ENCODE measurements at regions of chr1 and their contacts with region 1.

Region 1: GRCh38 chr1:221741711-221742554 is at the start of gene DUSP10:
- DNase-seq: peak; percentile 99
- H3K4me3 Mint-ChIP-seq: no peak within 1 kb of the TSS
- H3K27ac Mint-ChIP-seq: peak within 1 kb of the TSS; percentile 48
- H3K4me1 Mint-ChIP-seq: peaks cover 33% of the 10 kb centered on the region
- H3K27me3 Mint-ChIP-seq: no peaks in the 10 kb centered on the region
- total RNA-seq, gene DUSP10: 9.1 TPM

Region 2: DNA sequence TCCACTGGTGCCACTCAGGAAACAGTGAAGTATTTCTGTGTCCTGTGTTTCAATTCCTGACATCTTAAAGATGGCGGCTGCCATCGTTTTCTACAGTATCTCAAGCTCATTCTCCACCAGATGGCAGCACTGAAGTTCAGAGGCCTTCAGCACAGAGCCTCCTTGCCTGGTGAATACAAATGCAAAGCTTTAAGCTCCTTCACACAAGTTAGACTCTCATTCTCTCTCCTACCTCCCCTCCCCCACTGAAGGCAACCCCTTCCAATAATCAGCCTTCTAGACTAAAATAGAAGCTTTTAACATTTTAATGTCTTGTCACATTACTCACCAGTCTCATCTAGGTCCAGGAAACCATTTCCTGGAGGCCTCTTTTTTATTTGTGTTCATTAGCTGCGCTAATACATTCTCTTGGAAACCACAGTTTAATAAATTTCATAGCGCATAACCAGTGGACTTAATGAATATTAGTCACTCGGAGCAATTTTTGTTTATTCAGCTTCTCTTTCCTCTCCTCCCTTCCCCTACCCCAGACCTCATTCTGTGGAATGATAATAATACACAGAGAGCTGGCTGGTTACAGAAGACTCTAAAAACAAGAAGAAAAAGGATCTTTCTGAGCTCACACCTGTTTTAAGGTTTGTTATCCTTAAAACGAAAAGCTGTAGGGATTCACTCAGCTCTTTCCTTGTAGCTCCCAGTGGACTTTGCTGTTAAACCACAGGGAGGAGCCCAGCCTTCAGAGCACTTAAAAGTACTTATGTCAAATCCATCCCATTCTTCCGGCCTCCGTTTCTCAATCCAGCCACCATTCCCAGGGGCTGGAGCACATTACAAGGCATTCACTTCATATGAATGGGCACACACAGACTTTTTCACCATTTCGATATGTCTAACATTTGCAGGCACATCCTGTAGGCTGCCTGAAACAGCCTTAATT is 477.8 kb before region 1 on chr1:
- CTCF ChIA-PET with region 1: no interaction called
- intact Hi-C with region 1: loop called (anchors 5 kb)
- DNase-seq: peak; percentile 60
- H3K4me3 Mint-ChIP-seq: no peak overlapping the region
- H3K27ac Mint-ChIP-seq: no peak overlapping the region
- H3K4me1 Mint-ChIP-seq: no peaks in the 10 kb centered on the region
- H3K27me3 Mint-ChIP-seq: peaks cover 2% of the 10 kb centered on the region

Region 3: DNA sequence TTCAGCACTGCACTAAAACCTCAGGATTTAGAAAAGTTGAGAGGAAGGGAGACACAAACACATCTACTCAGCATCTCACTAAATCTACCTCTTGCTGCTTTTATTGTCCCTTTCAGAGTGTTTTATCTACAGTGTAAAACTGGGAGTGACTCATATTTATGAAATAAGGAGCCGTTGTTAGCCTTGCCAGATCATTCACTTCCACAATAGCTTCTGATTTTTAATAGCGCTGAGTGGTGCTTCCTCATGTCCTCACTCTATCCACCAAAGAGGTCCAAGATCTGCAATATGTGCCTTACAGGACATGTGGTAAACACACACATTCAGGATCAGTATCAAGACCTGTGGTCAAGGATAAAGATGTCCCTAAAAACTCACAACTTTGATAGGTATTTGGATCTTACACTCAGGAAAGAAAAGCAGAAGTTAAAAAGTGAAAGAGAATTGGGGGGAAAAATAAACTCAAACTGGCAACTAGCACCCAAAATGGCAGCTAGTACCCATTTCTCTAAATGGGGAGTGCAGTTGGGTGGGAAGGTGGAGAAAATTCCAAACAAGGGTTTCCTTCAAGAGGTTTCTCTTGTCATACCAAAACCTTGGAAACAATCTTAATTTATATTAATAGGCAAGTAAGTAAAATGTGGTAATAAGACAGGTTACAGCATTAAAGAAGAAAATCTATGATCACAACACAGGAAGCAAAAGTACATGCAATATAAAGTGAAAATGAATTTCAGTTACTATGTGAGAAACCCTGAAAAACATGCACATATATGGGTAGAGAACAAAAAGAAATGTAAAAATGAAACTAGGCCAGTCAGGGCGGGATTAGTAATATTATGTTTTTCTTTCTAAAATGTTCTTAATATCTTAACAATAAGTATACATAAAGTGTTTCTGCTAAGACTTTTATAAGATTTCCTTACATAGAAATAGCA is 15.9 kb before region 1 on chr1:
- CTCF ChIA-PET with region 1: interaction called, 10 read pairs
- intact Hi-C with region 1: loop called (anchors 1 kb)
- DNase-seq: no peak
- H3K4me3 Mint-ChIP-seq: peak overlapping the region; percentile 69
- H3K27ac Mint-ChIP-seq: peak overlapping the region; percentile 99
- H3K4me1 Mint-ChIP-seq: peaks cover 67% of the 10 kb centered on the region
- H3K27me3 Mint-ChIP-seq: no peaks in the 10 kb centered on the region

Region 4: DNA sequence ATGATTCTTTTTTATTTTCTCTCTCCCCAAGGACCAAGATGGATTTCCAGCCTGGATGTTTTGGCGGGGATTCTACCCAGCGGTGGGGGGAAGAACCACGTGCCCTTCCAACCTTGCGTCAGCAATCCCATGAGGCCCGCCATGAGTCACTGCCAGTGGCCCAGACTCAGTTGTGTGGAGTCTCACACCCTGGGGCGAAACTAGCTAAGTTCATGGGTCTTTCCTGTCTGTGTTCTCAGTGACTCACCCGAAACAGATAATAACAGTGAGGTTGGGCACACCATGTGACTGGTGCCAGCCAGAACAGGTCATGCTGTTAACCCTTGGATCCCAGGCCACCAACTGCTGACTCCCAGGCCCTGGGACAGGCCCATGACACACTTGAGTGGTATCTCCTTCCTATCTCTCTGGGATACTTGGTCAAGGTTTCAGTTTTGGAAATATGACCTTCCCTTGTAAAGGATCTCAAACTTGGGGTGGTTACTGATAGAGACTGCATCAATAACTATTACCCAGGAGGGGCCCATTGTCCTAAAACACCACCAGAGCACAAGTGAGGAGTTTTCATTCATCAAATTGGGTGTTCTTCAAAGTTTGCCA is 98.0 kb after region 1 on chr1:
- CTCF ChIA-PET with region 1: no interaction called
- intact Hi-C with region 1: loop called (anchors 1 kb)
- DNase-seq: peak; percentile 87
- H3K4me3 Mint-ChIP-seq: no peak overlapping the region
- H3K27ac Mint-ChIP-seq: peak overlapping the region; percentile 9
- H3K4me1 Mint-ChIP-seq: peaks cover 35% of the 10 kb centered on the region
- H3K27me3 Mint-ChIP-seq: peaks cover 5% of the 10 kb centered on the region

Region 5: DNA sequence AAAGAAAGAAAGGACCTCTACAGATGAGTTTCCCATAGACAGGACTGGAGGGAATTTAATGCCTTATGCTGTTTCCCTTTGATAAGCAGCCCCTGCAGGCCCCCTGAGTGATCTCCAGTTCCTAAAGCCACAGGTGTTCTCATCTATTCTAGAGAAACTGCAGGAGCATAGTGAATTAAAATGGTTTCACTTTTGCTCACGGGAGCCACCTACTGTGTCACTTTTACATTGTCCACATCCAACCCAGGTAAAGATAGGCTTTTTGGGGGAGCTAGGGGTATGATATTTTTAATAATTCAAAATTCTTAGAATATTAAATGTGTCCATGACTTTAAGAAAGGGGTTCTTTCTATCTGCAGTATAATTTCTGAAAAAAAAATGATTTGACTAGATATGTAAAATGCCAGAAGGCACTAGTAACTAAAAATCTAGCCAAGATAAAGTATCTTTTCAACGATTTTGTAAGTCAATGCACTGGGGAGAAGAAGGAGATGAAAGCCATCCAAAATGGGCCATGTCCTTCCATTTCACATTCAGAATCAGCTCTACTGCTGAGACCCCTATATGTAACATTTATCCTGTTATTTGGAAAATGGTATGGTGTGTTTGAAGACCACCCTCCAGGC is 267.3 kb after region 1 on chr1:
- CTCF ChIA-PET with region 1: interaction called, 4 read pairs
- intact Hi-C with region 1: loop called (anchors 1 kb)
- DNase-seq: peak; percentile 47
- H3K4me3 Mint-ChIP-seq: no peak overlapping the region
- H3K27ac Mint-ChIP-seq: no peak overlapping the region
- H3K4me1 Mint-ChIP-seq: no peaks in the 10 kb centered on the region
- H3K27me3 Mint-ChIP-seq: no peaks in the 10 kb centered on the region

Region 6: DNA sequence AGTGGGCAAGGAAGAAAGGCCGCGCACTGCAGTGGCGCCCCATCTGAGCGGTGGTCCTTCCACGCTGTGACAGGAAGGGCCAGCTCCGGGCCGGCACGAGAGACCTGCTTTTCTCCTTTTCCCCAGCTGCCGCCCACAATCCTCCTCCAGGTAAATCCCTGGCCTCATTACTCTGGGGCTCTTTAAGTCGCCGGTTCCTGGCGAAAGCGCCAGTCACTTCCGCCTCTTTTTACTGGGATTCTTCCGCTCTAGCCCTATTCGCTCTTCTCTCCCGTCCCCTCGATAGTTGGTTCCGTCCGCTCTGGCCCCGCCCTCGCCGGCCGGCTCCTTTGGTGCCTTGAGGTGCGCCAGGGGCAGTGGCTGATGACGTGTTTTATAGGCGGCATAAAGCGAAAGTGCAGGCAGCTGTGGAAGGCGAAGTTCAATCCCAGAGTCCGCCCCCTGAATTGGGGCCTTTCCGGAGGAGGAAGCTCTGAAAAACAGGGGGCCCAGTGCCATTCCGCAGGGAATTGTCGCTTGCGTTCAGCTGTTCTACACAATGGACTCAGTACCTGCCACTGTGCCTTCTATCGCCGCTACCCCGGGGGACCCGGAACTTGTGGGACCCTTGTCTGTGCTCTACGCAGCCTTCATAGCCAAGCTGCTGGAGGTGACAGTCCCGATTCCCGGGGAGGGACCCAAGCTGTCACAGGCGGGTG is 902.2 kb after region 1 on chr1:
- CTCF ChIA-PET with region 1: no interaction called
- intact Hi-C with region 1: loop called (anchors 1 kb)
- DNase-seq: peak; percentile 99
- H3K4me3 Mint-ChIP-seq: peak overlapping the region; percentile 99
- H3K27ac Mint-ChIP-seq: peak overlapping the region; percentile 92
- H3K4me1 Mint-ChIP-seq: peaks cover 32% of the 10 kb centered on the region
- H3K27me3 Mint-ChIP-seq: no peaks in the 10 kb centered on the region

Measured in activated naive CD4-positive, alpha-beta T cell treated with anti-CD3 and anti-CD28 coated beads for 36 hours (primary cell).